Activated CD8-positive, alpha-beta memory T cell treated with anti-CD3 and anti-CD28 coated beads, Interleukin-2, amount 10 ng/mL, durations not matched to agents 7 days and 5 days (primary cell): ENCODE measurements at regions of chr7 and their contacts with region 1.

Region 1: DNA sequence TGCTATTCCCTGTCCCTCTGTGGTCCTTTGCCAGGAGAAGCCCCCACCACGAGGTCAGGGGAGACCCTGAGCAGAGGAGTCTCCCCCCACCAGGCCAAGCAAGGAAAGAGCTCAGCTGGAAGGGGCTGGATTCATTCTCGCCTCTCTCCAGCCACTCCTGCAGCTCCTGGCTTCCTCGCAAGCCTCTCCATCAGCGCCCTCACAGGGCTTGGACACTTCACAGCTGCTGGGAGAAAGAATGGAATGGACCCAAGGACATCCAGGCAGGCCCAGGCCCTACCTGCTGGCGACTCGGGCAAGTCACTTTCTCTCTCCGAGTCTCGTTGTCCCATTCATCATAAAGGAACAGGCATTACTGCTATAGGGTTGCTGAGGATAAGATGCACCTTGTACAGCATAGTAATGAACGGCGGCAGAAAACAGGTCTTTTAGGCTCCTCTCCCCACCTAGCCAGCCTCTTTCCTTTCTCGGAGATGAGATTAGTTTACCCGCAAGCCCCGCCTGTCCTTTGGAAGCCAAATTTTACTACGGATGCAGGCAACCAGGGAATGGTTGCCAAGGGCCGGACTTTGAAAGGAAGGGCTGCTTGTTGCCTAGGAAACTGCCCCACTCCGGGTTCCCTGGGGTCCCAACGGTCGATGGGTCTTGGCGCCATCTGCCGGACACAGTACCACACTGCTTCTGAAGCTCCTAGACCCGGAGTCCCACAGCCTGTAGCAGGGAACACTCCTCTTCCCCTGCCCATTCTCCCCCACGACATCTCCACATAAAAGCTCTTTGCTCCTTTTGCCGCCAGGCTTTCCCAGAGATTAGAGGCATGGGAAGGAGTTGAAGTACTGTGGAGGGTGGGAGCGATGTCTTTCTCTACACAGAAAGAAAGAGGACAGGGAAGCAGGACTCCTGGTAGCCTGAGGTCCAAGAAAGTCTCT is 22.3 kb downstream of the IMPDH1 start:
- DNase-seq: peak; percentile 77
- ATAC-seq: peak; percentile 94
- H3K4me3 Mint-ChIP-seq: no peak overlapping the region
- H3K27ac Mint-ChIP-seq: no peak overlapping the region
- H3K4me1 Mint-ChIP-seq: no peaks in the 10 kb centered on the region
- H3K27me3 Mint-ChIP-seq: no peaks in the 10 kb centered on the region

Region 2: GRCh38 chr7:128356546-128357216 is 30.8 kb before region 1 on chr7:
- CTCF ChIA-PET with region 1: interaction called, 191 read pairs
- DNase-seq: no peak
- ATAC-seq: no peak
- H3K4me3 Mint-ChIP-seq: no peak overlapping the region
- H3K27ac Mint-ChIP-seq: no peak overlapping the region
- H3K4me1 Mint-ChIP-seq: peaks cover 13% of the 10 kb centered on the region
- H3K27me3 Mint-ChIP-seq: peaks cover 48% of the 10 kb centered on the region

Region 3: GRCh38 chr7:128398016-128398840 is 10.7 kb after region 1 on chr7:
- CTCF ChIA-PET with region 1: interaction called, 14 read pairs
- DNase-seq: peak; percentile 55
- ATAC-seq: peak; percentile 38
- H3K4me3 Mint-ChIP-seq: no peak overlapping the region
- H3K27ac Mint-ChIP-seq: no peak overlapping the region
- H3K4me1 Mint-ChIP-seq: peaks cover 5% of the 10 kb centered on the region
- H3K27me3 Mint-ChIP-seq: no peaks in the 10 kb centered on the region

Region 4: GRCh38 chr7:128409596-128410160 is 22.2 kb after region 1 on chr7 and contains the start of gene IMPDH1:
- CTCF ChIA-PET with region 1: interaction called, 17 read pairs
- DNase-seq: peak; percentile 90
- ATAC-seq: peak; percentile 91
- H3K4me3 Mint-ChIP-seq: peak within 1 kb of the TSS; percentile 85
- H3K27ac Mint-ChIP-seq: peak within 1 kb of the TSS; percentile 74
- H3K4me1 Mint-ChIP-seq: peaks cover 18% of the 10 kb centered on the region
- H3K27me3 Mint-ChIP-seq: peaks cover 31% of the 10 kb centered on the region
- total RNA-seq, gene IMPDH1: 54.1 to 62.8 TPM